Calu3 (cell line): ENCODE measurements at regions of chr11 and their contacts with region 1.

Region 1: DNA sequence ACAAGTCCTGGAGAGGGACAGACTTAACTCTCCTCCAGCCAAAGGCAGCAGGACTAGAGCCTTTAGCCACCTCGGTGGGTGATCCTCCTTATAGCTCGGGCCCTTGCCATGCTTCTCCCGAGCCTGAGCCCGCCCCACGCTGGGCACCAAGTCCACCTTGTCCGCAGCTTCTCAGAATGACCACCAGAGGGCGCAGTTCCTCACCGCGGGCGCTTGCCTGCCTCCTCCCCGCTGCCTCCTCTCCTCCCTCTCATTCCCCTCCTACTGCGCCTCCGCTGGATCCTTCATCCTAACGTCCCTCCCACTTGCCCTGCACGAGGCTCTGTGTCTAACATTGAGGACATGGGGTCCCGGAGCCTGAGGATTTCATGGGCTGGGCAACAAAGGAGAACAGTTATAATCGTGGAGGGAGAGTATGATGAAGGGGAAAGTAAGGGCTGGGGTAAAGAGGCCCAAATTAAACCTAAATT is 11.3 kb upstream of the MOGAT2 start:
- DNase-seq: peak; percentile 83
- H3K4me3 Mint-ChIP-seq: peak overlapping the region; percentile 16
- H3K27ac Mint-ChIP-seq: peak overlapping the region; percentile 48
- H3K4me1 Mint-ChIP-seq: peaks cover 16% of the 10 kb centered on the region
- H3K27me3 Mint-ChIP-seq: peaks cover 19% of the 10 kb centered on the region
- CTCF ChIP-seq: peak; percentile 85

Region 2: DNA sequence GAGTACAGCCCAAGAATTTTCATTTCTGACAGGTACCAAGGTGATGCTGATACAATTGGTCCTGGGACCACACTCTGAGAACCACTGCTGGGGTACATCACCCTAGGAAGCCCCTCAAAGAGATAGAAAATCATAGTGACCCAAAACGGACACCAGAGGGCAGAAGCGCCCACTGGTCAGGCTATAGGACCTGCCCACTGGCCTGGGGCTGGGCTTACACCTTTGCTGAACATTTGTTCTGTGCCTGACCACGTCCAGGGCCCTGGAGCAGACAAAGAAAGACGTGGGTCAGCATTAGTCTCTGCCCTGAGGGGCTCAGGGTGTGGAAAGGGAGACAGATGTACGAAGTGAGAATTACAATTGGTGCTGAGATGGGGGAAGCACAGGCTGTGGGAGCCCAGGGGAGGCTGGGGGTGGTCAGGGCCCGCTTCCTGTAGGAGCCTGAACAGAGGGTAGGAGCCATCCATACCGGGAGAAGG is 158.7 kb before region 1 on chr11:
- CTCF ChIA-PET with region 1: no interaction called
- intact Hi-C with region 1: loop called (anchors 5 kb)
- DNase-seq: peak; percentile 68
- H3K4me3 Mint-ChIP-seq: no peak overlapping the region
- H3K27ac Mint-ChIP-seq: no peak overlapping the region
- H3K4me1 Mint-ChIP-seq: no peaks in the 10 kb centered on the region
- H3K27me3 Mint-ChIP-seq: peaks cover 35% of the 10 kb centered on the region
- CTCF ChIP-seq: peak; percentile 84

Region 3: GRCh38 chr11:75562048-75562835 is 144.1 kb before region 1 on chr11 and contains the start of gene SERPINH1:
- CTCF ChIA-PET with region 1: no interaction called
- intact Hi-C with region 1: no loop called
- DNase-seq: peak; percentile 83
- H3K4me3 Mint-ChIP-seq: peak within 1 kb of the TSS; percentile 91
- H3K27ac Mint-ChIP-seq: peak within 1 kb of the TSS; percentile 62
- H3K4me1 Mint-ChIP-seq: peaks cover 17% of the 10 kb centered on the region
- H3K27me3 Mint-ChIP-seq: no peaks in the 10 kb centered on the region
- CTCF ChIP-seq: no peak
- total RNA-seq, gene SERPINH1: 58.8 and 80.0 TPM in 2 replicates

Region 4: GRCh38 chr11:75597636-75598035 is 108.7 kb before region 1 on chr11:
- CTCF ChIA-PET with region 1: interaction called, 7 read pairs
- intact Hi-C with region 1: loop called (anchors 10 kb)
- DNase-seq: peak; percentile 29
- H3K4me3 Mint-ChIP-seq: no peak overlapping the region
- H3K27ac Mint-ChIP-seq: no peak overlapping the region
- H3K4me1 Mint-ChIP-seq: peaks cover 6% of the 10 kb centered on the region
- H3K27me3 Mint-ChIP-seq: peaks cover 89% of the 10 kb centered on the region
- CTCF ChIP-seq: peak; percentile 40

Region 5: GRCh38 chr11:76318744-76319384 is 612.6 kb after region 1 on chr11:
- CTCF ChIA-PET with region 1: interaction called, 5 read pairs
- intact Hi-C with region 1: loop called (anchors 10 kb)
- DNase-seq: peak; percentile 84
- H3K4me3 Mint-ChIP-seq: no peak overlapping the region
- H3K27ac Mint-ChIP-seq: no peak overlapping the region
- H3K4me1 Mint-ChIP-seq: peaks cover 9% of the 10 kb centered on the region
- H3K27me3 Mint-ChIP-seq: peaks cover 54% of the 10 kb centered on the region
- CTCF ChIP-seq: peak; percentile 83